ENCODE measurements at regions of chr11 and their contacts with region 1.

Region 1: DNA sequence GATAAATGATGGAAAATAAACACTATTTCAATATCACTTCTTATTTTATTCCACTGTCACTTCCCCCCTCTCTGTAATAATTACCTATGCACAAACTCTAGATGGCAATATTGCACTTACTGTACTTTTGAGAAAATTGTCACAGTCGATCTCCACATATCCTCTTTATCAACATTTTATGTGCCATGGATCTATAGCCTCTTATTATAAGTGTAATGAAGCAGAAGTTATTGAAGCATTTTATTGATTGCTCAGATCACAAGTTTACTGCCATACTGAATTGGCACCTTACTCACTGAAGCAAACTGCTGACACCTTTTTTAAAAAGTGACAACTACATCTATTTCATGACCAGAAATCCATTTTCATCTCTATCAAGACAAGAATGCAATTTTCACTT is 133.4 kb downstream of the DCDC1 start:
- DNase-seq: peak; percentile 8
- H3K4me3 ChIP-seq: no peak overlapping the region
- H3K27ac ChIP-seq: no peak overlapping the region
- H3K4me1 ChIP-seq: no peaks in the 10 kb centered on the region
- CTCF ChIP-seq: peak; percentile 73

Region 2: DNA sequence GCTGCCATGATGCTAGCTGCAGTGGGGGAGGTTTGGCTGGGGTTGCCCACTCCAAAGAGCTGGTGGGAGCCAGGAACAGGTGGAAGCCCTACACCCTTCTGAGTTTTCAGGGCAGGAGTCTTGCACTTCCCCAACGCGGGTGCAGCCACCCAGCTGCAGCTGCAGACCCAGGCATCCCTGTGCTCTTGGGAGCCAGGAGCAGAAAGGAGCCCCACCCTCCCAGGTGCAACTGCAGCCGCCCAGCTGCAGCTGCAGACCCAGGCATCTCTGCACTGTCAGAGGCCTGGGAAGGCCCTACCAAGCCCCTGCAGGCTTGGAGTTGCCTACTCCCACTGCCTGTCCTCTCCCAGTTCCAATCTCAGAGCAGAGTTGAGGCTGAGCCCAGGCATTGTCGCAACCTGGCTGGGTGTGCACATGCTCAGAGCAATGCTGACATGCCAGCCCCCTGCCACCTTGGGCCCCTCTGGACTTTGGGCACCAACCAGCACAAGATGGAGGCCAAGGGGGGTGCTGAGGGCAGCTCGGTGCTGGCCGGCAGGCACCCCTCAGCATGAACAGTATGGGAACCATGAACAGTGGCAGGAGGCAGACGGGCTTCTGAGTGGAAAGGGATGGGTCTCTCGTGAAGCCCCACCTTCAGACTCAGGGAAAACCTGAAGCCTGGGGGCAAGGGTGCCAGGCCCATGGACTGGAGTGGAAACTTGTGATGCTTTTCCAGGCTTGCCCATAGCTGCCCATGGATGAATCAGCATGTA is 62.0 kb before region 1 on chr11:
- CTCF ChIA-PET with region 1: no interaction called
- POLR2A ChIA-PET with region 1: no interaction called
- intact Hi-C with region 1: no loop called
- DNase-seq: no peak
- H3K4me3 ChIP-seq: no peak overlapping the region
- H3K27ac ChIP-seq: no peak overlapping the region
- H3K4me1 ChIP-seq: no peaks in the 10 kb centered on the region
- CTCF ChIP-seq: no peak

Region 3: DNA sequence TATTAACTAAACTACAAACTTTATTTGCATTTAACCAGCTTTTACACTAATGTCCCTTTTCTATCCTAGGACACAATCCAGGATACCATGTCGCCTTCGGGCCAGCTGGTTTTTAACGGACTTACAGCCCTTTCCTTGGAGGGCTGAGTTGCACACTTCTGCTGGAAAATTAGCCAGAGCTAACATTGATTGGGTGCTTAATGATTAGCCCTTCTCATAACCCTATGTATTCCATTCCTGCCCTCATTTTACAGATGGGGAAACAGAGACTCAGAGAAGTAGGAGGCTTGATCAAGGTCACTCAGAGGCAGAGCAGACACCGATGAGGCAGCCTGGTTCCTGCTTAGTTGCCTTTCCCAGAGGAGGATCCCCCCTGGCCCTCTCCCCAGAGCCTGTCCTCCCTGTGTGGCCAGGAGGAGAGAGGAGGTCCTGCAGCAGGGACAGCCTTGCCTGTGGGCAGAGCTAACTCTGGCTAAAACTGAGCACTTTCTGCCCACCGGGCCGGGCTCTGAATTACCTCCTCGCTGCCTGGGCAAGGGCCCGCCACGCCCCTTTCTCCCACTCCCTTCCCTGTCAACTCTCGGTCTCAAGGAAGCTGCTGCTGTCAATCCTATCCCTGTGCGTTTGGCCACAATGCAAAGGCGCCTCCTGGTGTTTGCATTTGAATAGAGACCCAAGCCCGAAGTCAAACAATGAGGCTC is 634.6 kb after region 1 on chr11:
- CTCF ChIA-PET with region 1: no interaction called
- POLR2A ChIA-PET with region 1: no interaction called
- intact Hi-C with region 1: loop called (anchors 5 kb)
- DNase-seq: no peak
- H3K4me3 ChIP-seq: no peak overlapping the region
- H3K27ac ChIP-seq: no peak overlapping the region
- H3K4me1 ChIP-seq: no peaks in the 10 kb centered on the region
- CTCF ChIP-seq: peak; percentile 61

Region 4: GRCh38 chr11:31958076-31958735 is 722.1 kb after region 1 on chr11:
- CTCF ChIA-PET with region 1: no interaction called
- POLR2A ChIA-PET with region 1: no interaction called
- intact Hi-C with region 1: loop called (anchors 10 kb)
- DNase-seq: peak; percentile 35
- H3K4me3 ChIP-seq: no peak overlapping the region
- H3K27ac ChIP-seq: no peak overlapping the region
- H3K4me1 ChIP-seq: no peaks in the 10 kb centered on the region
- CTCF ChIP-seq: peak; percentile 80

Measured in OCI-LY7 (cell line).